CD14-positive monocyte (primary cell): ENCODE measurements at regions of chr17 and their contacts with region 1.

Region 1: DNA sequence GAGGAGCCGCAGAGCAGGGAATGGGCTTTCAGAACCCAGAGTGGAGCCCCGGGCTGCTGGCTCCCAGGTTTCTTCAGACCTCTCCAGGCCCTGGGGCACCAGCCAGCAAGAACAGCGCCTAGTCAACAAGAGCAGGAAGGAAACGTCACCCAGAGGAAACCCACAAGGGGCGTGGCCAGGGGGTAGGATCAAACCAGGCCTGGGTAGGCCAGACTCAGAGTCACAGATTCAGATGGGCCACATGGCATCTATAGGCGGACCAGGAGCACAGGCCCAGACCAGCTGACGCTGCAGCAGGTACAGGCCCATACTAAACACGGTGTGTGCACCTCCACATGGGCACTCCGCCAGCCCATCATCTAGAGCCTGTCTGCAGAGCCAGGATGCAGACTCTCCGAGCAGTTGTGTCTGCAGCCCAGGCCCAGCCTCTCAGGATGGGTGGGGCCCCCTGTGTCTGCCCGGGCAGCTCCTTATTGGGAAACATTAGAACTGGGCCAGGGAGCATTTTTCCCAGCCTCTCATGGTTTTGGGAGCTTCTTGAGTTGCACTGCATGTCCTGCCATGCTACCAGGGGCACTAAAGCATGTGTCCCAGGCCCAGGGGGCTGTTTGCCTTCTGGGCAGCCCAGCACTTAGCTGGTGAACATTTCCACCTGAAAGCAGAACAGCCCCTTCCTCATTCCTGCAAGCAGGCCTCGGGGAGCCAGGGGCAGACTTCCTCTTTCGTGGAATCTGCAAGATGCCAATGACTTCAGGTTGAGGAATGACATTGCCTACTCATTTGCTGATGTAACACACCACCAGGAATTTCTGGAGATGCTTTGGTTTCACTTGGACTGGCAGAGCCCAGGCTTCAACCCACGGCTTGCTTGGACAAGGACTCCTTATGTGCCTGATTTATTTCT is at the start of gene NLRP1:
- DNase-seq: peak; percentile 89 to 93 (median 93)
- H3K4me3 ChIP-seq: peak within 1 kb of the TSS; percentile 66 to 100 (median 98)
- H3K4me3 Mint-ChIP-seq: peak within 1 kb of the TSS; percentile 96
- H3K27ac ChIP-seq: peak within 1 kb of the TSS; percentile 87 to 96
- H3K27ac Mint-ChIP-seq: peak within 1 kb of the TSS; percentile 95 to 99 (median 97)
- H3K4me1 ChIP-seq: peaks cover 61 to 73% of the 10 kb centered on the region in 2 donors
- H3K4me1 Mint-ChIP-seq: peaks cover 66% of the 10 kb centered on the region
- H3K27me3 ChIP-seq: peaks cover 0 to 3% of the 10 kb centered on the region in 2 donors
- H3K27me3 Mint-ChIP-seq: peaks cover 2 to 11% (median 10%) of the 10 kb centered on the region in 3 donors
- CTCF ChIP-seq: no peak
- polyA plus RNA-seq, gene NLRP1: 13.2 to 388 (median 17.3) TPM

Region 2: DNA sequence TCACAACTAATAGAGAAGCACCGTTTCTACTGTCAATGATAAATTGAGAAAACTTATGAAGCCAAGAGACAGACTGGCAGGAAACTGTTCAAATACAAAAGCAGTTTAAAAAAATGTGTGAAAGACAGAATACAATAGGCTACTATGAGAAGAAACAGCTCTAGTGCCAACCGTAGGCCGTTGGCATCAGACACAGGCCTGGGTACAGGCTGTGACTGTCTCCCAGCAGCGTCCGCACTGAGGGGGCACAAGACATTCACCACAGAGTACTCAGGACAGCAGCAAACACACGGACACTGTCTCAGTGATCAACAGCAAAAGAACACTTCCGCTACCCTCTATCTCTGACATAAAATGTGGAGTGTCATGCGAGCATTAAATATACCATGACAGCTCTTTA is 137.8 kb before region 1 on chr17:
- intact Hi-C with region 1: no loop called
- DNase-seq: no peak
- H3K4me3 ChIP-seq: no peak overlapping the region
- H3K4me3 Mint-ChIP-seq: no peak overlapping the region
- H3K27ac ChIP-seq: no peak overlapping the region
- H3K27ac Mint-ChIP-seq: no peak overlapping the region
- H3K4me1 ChIP-seq: no peaks in the 10 kb centered on the region
- H3K4me1 Mint-ChIP-seq: no peaks in the 10 kb centered on the region
- H3K27me3 ChIP-seq: no peaks in the 10 kb centered on the region
- H3K27me3 Mint-ChIP-seq: no peaks in the 10 kb centered on the region
- CTCF ChIP-seq: no peak

Region 3: DNA sequence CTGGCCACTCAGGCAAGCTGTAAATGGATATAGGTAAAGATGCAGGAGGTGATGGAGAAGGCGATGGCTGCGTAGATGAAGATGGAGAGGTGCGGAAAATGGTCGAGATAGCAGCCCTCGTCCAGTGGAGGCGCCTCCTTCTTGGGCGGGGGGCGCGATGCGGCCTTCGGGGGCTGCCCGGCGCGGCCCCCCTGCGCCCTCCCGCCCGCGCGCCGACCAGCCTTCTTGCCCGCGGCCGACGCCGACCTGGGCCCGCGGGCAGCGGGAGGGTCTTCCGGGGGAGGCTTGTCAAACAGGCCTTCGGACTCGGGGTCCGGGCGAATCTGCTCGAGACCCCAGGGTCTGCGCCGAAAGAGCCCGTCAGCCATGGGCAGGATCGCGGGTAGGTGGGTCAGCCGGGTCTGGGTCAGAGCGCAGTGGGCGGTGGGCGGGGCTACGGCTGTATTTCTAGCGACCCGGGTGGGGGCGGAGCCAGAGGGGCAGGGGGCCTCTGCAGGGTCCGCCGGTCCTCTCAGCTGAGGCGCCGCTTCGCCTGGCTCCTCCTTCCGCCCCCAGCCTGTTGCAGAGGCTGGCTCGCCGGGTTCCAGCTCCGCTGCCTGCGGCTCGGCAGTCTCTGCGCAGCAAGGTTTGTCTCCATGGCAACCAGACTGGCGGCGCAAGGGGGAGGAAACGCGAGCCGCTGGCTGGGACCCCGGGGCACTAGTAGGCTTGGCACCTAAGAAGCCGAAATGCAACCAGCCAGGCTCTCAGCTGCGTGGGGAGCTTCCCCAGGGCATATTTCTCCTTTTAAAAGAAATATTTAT is 83.8 kb before region 1 on chr17:
- intact Hi-C with region 1: no loop called
- DNase-seq: no peak
- H3K4me3 ChIP-seq: peak overlapping the region in 1 of 3 experiments; percentile 20
- H3K4me3 Mint-ChIP-seq: peak overlapping the region; percentile 59 to 65
- H3K27ac ChIP-seq: no peak overlapping the region
- H3K27ac Mint-ChIP-seq: peak overlapping the region in 1 of 7 donors; percentile 73
- H3K4me1 ChIP-seq: peaks cover 10 to 12% of the 10 kb centered on the region in 2 donors
- H3K4me1 Mint-ChIP-seq: peaks cover 10% of the 10 kb centered on the region
- H3K27me3 ChIP-seq: peaks cover 5 to 28% of the 10 kb centered on the region in 2 donors
- H3K27me3 Mint-ChIP-seq: peaks cover 15 to 30% (median 27%) of the 10 kb centered on the region in 3 donors
- CTCF ChIP-seq: no peak

Region 4: GRCh38 chr17:5571281-5571680 is 13.4 kb before region 1 on chr17:
- intact Hi-C with region 1: no loop called
- DNase-seq: no peak
- H3K4me3 ChIP-seq: no peak overlapping the region
- H3K4me3 Mint-ChIP-seq: no peak overlapping the region
- H3K27ac ChIP-seq: no peak overlapping the region
- H3K27ac Mint-ChIP-seq: no peak overlapping the region
- H3K4me1 ChIP-seq: peaks cover 0 to 12% of the 10 kb centered on the region in 2 donors
- H3K4me1 Mint-ChIP-seq: peaks cover 29% of the 10 kb centered on the region
- H3K27me3 ChIP-seq: no peaks in the 10 kb centered on the region
- H3K27me3 Mint-ChIP-seq: peaks cover 0 to 2% (median 0%) of the 10 kb centered on the region in 3 donors
- CTCF ChIP-seq: no peak

Region 5: DNA sequence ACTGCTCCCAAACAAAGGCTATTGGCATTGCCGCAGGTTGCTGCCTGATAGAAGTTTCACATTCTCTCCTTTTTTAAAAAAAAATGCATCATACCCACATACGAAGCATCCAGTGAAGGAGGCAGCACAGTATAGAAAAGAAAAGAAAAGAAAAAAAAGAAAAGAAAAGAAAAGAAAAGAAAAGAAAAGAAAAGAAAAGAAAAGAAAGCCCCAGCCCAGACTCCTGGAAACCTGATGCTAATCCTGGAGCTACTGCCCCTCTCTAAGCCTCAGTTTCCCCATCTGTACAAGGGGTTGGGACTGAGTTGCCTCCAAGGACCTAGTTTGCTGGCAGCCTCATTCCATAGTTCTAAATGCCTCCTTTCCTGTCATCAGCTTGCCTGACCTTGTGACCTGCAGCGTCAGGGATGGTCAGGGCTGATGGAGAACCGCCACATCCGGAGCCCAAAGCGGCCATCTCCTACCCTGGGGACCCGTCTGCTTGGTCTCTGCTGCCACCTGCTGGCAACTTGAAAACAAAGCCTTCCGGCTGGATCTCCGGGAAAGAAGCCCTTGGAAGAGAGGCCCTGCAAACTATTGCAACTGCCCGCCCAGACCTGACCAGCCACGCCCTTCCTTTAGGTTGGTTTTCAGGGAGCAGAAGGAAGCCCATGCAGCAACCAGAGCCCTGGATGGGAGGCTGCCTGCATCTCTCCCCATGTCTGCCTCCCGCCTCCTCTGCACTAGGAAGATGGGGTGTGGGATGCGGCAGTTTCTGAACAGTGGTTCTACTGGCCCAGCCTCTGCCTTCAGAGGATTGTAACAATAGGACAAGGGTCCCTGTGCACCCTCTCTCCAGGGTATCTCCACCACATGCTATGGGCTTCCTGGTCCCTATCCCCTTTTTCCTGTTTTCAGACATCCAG is 837.3 kb after region 1 on chr17:
- intact Hi-C with region 1: loop called (anchors 2 to 5 kb)
- DNase-seq: peak; percentile 73 to 82 (median 77)
- H3K4me3 ChIP-seq: no peak overlapping the region
- H3K4me3 Mint-ChIP-seq: peak overlapping the region in 1 of 2 donors; percentile 67
- H3K27ac ChIP-seq: no peak overlapping the region
- H3K27ac Mint-ChIP-seq: no peak overlapping the region
- H3K4me1 ChIP-seq: peaks cover 0 to 3% of the 10 kb centered on the region in 2 donors
- H3K4me1 Mint-ChIP-seq: peaks cover 8% of the 10 kb centered on the region
- H3K27me3 ChIP-seq: peaks cover 0 to 58% of the 10 kb centered on the region in 2 donors
- H3K27me3 Mint-ChIP-seq: peaks cover 39 to 68% (median 43%) of the 10 kb centered on the region in 3 donors
- CTCF ChIP-seq: peak; percentile 86

Region 6: GRCh38 chr17:6443692-6444569 is 859.3 kb after region 1 on chr17 and contains the start of gene PIMREG:
- intact Hi-C with region 1: loop called in 1 of 2 experiments (anchors 5 kb)
- DNase-seq: peak; percentile 84 to 86 (median 86)
- H3K4me3 ChIP-seq: peak within 1 kb of the TSS; percentile 54 to 91 (median 75)
- H3K4me3 Mint-ChIP-seq: peak within 1 kb of the TSS; percentile 97 to 99
- H3K27ac ChIP-seq: peak within 1 kb of the TSS; percentile 64 to 77
- H3K27ac Mint-ChIP-seq: peak within 1 kb of the TSS; percentile 92 to 97 (median 95)
- H3K4me1 ChIP-seq: peaks cover 20 to 25% of the 10 kb centered on the region in 2 donors
- H3K4me1 Mint-ChIP-seq: peaks cover 24% of the 10 kb centered on the region
- H3K27me3 ChIP-seq: no peaks in the 10 kb centered on the region
- H3K27me3 Mint-ChIP-seq: peaks cover 6 to 13% (median 11%) of the 10 kb centered on the region in 3 donors
- CTCF ChIP-seq: no peak
- polyA plus RNA-seq, gene PIMREG: not detected